ENCODE measurements at regions of chr15 and their contacts with region 1.

Region 1: GRCh38 chr15:22980189-22981050 is at the start of gene CYFIP1:
- DNase-seq: peak; percentile 83 to 95
- H3K4me3 ChIP-seq: peak within 1 kb of the TSS; percentile 82 to 98
- H3K27ac ChIP-seq: peak within 1 kb of the TSS; percentile 82 to 88
- H3K4me1 ChIP-seq: peaks cover 0 to 20% (median 13%) of the 10 kb centered on the region in 4 donors
- H3K27me3 ChIP-seq: no peaks in the 10 kb centered on the region
- CTCF ChIP-seq: no peak

Region 2: GRCh38 chr15:22811640-22812039 is 168.8 kb before region 1 on chr15:
- intact Hi-C with region 1: no loop called
- DNase-seq: peak in 1 of 2 donors; percentile 26
- H3K4me3 ChIP-seq: no peak overlapping the region
- H3K27ac ChIP-seq: no peak overlapping the region
- H3K4me1 ChIP-seq: no peaks in the 10 kb centered on the region
- H3K27me3 ChIP-seq: no peaks in the 10 kb centered on the region
- CTCF ChIP-seq: peak; percentile 15 to 21

Region 3: DNA sequence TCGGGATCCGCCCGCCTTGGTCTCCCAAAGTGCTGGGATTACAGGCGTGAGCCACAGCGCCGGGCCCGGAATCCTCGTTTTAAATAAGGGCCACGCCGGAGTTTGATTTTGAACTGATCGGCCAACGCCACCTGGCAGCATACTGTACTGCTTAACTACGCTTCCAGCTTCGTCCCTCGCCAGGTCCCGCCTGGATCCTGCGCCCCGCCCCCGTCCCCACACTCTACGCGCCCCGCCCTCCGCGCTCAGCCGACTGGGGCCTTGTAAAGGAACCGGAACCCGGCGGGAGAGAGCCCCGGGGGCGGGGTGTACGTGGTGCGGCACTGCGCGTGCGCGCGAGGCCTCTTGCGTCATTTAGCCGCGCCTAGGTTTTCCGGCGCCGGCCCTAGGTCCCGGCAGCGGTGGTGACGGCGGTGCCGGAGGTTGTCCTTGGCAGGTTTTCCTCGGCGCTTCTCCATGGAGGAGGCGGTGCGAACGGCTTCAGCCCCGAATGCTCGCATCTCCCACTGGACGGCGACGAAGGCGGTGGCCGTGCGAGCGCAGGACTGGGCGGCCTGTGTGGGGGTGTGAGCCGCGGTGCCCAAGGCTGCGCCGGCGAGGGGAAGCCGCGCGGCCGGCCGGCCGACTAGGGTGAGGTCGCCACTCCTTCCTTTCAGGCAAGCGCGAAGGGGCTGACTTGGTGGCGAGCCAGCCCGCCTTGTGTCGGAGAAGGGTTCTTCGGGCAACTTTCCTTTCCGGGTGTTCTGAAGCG is 142.0 kb before region 1 on chr15 and contains the start of gene NIPA2:
- intact Hi-C with region 1: loop called (anchors 10 kb)
- DNase-seq: peak; percentile 98 to 99
- H3K4me3 ChIP-seq: peak within 1 kb of the TSS; percentile 77 to 88
- H3K27ac ChIP-seq: peak within 1 kb of the TSS; percentile 92
- H3K4me1 ChIP-seq: peaks cover 0 to 22% (median 13%) of the 10 kb centered on the region in 4 donors
- H3K27me3 ChIP-seq: no peaks in the 10 kb centered on the region
- CTCF ChIP-seq: peak in 1 of 2 experiments; percentile 31

Region 4: GRCh38 chr15:22951377-22952295 is 28.8 kb before region 1 on chr15:
- intact Hi-C with region 1: loop called (anchors 2 kb)
- DNase-seq: peak in 1 of 2 donors; percentile 87
- H3K4me3 ChIP-seq: peak overlapping the region; percentile 6 to 10
- H3K27ac ChIP-seq: peak overlapping the region; percentile 72 to 77
- H3K4me1 ChIP-seq: peaks cover 10 to 90% (median 70%) of the 10 kb centered on the region in 4 donors
- H3K27me3 ChIP-seq: no peaks in the 10 kb centered on the region
- CTCF ChIP-seq: no peak